ENCODE measurements at regions of chr2 and their contacts with region 1.

Region 1: GRCh38 chr2:168246483-168247340 is 683 bp downstream of the STK39 start:
- H3K4me3 Mint-ChIP-seq: peak overlapping the region; percentile 76
- H3K27ac Mint-ChIP-seq: no peak overlapping the region
- H3K4me1 Mint-ChIP-seq: peaks cover 20% of the 10 kb centered on the region
- H3K27me3 Mint-ChIP-seq: peaks cover 8% of the 10 kb centered on the region

Region 2: DNA sequence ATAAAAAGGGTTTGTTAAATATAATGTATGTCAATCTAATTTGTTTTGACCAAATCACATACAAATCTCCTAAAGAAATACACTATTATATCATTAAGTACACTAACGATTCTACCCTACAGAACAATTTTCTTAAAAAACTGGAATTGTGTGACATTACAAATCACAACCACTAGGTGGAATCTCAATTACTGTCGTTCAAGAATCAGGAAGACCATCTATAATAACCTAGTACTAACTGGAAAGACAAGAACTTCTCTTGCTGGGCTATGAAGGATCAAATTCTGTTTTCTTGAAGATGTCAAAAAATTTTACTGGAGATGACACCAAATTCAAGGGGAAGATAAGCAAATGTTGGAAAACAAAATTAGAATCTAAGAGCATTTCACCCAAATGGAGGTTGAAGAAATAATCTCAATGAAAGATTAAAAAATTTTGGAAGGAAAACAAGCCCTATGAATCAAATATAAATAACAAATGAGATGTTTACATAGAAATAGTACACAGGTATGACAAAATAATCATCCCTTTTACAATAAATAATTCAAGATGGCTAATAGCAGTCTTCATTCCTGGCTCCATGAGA is 110.2 kb before region 1 on chr2:
- intact Hi-C with region 1: loop called (anchors 1 kb)
- H3K4me3 Mint-ChIP-seq: no peak overlapping the region
- H3K27ac Mint-ChIP-seq: no peak overlapping the region
- H3K4me1 Mint-ChIP-seq: no peaks in the 10 kb centered on the region
- H3K27me3 Mint-ChIP-seq: no peaks in the 10 kb centered on the region

Region 3: DNA sequence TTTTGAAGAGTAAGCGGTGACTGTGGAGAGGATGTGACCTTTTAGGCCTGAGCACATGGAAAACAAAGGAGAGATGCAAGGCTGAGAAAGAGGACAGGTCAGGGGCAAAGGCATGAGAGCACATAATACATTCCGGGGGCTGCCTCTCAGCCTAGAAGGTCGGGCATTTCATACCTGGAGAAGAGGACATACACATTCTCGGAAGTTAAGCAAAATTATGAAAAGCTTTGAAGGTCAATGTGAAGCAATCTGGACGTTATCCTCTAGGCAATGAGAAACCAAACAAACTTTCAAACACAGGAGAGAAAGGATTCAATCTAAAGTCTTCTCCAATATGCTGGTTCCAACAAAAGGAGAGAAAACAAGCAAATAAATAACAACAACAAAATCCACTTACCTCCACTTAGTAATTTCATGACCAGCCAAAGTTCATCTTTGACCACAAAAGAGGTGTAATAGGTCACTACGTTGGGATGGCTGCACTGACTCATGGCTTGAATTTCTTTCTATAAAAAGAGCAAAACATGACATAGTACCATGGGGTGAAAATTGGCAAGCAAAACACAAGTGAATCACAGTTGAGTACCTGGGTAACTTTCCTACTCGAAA is 79.7 kb before region 1 on chr2:
- intact Hi-C with region 1: loop called (anchors 5 kb)
- H3K4me3 Mint-ChIP-seq: no peak overlapping the region
- H3K27ac Mint-ChIP-seq: peak overlapping the region; percentile 35
- H3K4me1 Mint-ChIP-seq: peaks cover 55% of the 10 kb centered on the region
- H3K27me3 Mint-ChIP-seq: no peaks in the 10 kb centered on the region

Region 4: GRCh38 chr2:168278424-168278888 is 31.7 kb after region 1 on chr2:
- intact Hi-C with region 1: no loop called
- H3K4me3 Mint-ChIP-seq: no peak overlapping the region
- H3K27ac Mint-ChIP-seq: no peak overlapping the region
- H3K4me1 Mint-ChIP-seq: no peaks in the 10 kb centered on the region
- H3K27me3 Mint-ChIP-seq: peaks cover 4% of the 10 kb centered on the region

Region 5: GRCh38 chr2:168912901-168913369 is 666.2 kb after region 1 on chr2:
- intact Hi-C with region 1: loop called (anchors 10 kb)
- H3K4me3 Mint-ChIP-seq: peak overlapping the region; percentile 65
- H3K27ac Mint-ChIP-seq: no peak overlapping the region
- H3K4me1 Mint-ChIP-seq: peaks cover 11% of the 10 kb centered on the region
- H3K27me3 Mint-ChIP-seq: peaks cover 14% of the 10 kb centered on the region